Psoas muscle (tissue), 8 donors: ENCODE measurements at regions of chr16 and their contacts with region 1.

Region 1: DNA sequence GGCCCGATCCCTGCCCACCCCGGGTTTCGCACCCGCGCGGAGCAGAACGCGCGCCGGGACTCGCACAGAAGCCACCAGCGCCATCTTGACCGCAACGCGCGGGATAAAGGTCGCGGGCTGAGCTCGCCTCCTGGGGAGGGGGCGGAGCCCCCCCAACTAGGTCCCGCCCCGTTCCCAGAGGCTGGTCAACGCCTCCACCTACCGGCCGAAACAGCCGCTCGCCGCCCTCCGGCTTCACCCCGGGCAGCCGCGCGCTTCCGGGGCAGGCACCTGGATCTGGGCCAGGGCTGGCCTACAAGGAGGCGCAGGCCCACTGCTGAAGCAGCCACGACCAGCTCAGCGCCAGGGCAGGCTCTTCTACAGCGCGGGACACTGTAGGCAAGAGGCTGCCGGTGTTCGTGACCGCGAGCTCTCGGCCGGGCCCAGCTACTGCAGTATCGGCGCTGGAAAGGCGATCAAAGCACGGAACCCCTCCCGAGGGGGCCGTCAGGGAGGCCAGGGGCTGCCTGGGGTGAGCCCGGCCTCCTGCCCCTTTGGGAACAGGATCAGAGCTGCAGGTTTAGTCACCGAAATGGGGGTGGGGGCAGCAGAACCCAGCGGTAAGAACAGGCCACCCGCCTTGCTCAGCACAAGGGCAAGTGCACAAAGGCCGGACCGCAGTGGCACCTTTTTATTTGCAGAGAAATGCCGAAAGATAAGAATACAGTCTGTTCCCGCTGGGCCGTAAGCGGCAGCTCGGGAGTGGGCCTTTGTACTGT is at the start of gene ECI1:
- DNase-seq: peak; percentile 96 to 99
- ATAC-seq: peak; percentile 96 to 98 (median 96)
- H3K4me3 ChIP-seq: peak within 1 kb of the TSS; percentile 73
- H3K27ac ChIP-seq: peak within 1 kb of the TSS; percentile 87
- H3K4me1 ChIP-seq: peaks cover 18% of the 10 kb centered on the region
- H3K27me3 ChIP-seq: no peaks in the 10 kb centered on the region
- CTCF ChIP-seq: peak; percentile 76
- total RNA-seq, gene ECI1: 103 to 143 (median 126) TPM

Region 2: DNA sequence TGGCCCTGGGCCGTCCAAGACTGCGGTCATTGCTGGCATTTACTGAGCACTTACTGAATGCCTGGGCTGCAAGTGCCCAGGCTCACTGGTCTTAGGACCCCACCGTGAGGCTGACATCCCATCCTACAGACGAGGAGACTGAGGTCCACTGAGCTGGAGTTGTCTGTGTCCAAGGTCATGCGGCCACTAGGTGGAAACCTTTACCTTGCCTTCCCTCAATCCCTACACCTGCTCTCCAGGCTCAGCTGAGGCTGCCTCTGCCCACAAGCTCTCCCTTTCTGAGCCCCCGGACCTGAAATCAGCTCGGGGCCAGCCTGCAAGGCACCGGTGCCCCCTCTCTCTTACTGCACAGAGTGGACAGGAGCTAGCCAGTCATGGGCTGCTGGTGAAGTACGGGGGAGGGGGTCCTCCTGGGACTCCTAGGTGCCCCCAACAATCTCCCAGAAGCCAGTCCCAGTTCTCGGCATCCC is 56.8 kb before region 1 on chr16:
- intact Hi-C with region 1: loop called in 1 of 2 experiments (anchors 1 kb)
- DNase-seq: no peak
- ATAC-seq: peak; percentile 64 to 91 (median 86)
- H3K4me3 ChIP-seq: peak overlapping the region; percentile 55
- H3K27ac ChIP-seq: no peak overlapping the region
- H3K4me1 ChIP-seq: peaks cover 8% of the 10 kb centered on the region
- H3K27me3 ChIP-seq: peaks cover 0 to 42% (median 20%) of the 10 kb centered on the region in 3 donors
- CTCF ChIP-seq: peak; percentile 55

Region 3: DNA sequence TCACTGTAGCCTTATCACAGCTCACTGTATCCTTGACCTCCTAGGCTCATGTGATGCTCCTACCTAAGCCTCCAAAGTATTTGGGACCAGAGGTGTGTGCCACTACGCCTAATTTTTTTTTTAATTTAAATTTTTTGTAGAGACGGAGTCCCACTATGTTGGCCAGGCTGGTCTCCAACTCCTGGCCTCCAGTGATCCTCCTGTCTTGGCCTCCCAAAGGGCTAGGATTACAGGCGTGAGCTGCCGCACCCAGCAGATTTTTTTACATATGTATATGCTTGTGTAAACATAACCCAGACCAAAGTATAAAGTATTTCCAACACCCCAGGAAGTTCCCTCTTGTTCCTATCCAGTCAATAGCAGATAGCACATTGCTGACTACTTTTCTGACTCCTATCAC is 35.3 kb before region 1 on chr16:
- intact Hi-C with region 1: loop called in 1 of 2 experiments (anchors 5 kb)
- DNase-seq: no peak
- ATAC-seq: no peak
- H3K4me3 ChIP-seq: peak overlapping the region; percentile 70
- H3K27ac ChIP-seq: peak overlapping the region; percentile 91
- H3K4me1 ChIP-seq: peaks cover 26% of the 10 kb centered on the region
- H3K27me3 ChIP-seq: no peaks in the 10 kb centered on the region
- CTCF ChIP-seq: no peak